ENCODE measurements at regions of chr9 and their contacts with region 1.

Region 1: GRCh38 chr9:121545875-121546423 is 46.3 kb upstream of the GGTA1 start:
- DNase-seq: peak; percentile 95

Region 2: GRCh38 chr9:121439711-121440664 is 106.0 kb before region 1 on chr9:
- in situ Hi-C with region 1: loop called (anchors 10 kb)
- DNase-seq: no peak

Region 3: DNA sequence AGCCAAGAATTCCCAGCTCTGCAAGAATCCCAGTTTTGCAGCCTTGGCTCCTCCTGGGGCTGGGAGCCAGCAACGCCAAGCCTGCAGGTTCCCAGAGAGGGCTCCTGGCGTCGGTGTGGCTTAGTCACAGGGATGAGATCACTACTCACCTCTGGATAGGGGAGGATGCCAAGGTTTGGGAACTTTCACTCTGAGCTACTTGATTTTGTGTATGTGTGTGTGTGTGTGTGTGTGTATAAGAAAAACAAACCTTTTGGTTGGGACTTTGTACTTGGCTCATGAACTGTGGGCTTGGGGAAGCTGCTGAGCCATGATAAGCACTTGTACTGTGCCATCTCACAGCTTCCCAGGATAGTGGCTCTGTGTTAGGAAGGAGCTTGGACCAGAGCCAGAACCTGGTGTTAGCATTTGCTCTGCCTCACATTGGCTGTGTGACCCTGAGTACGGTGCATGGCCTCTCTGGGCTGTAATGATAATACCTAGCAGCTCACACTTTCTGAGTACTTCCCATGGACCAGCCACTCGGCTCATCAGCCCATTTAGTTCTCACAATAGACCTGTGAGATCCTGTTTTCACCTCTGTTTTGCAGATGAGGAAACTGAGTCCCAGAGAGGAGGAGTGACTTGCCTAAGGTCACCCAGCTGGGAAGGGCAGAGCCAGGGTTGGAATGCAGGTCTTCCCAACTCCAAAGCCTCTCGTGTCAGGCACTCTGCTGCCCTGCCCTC is 64.1 kb after region 1 on chr9:
- in situ Hi-C with region 1: no loop called
- DNase-seq: no peak

Region 4: GRCh38 chr9:121658166-121658565 is 112.2 kb after region 1 on chr9:
- in situ Hi-C with region 1: no loop called
- DNase-seq: peak; percentile 77

Measured in G401 (cell line).